AG04450 (cell line): ENCODE measurements at regions of chr3 and their contacts with region 1.

Region 1: GRCh38 chr3:25594007-25594502 is 70.7 kb downstream of the TOP2B start:
- DNase-seq: peak; percentile 71
- H3K4me3 ChIP-seq: no peak overlapping the region
- H3K27ac ChIP-seq: no peak overlapping the region
- H3K27me3 ChIP-seq: no peaks in the 10 kb centered on the region
- CTCF ChIP-seq: peak; percentile 75

Region 2: GRCh38 chr3:25532431-25533162 is 61.5 kb before region 1 on chr3:
- CTCF ChIA-PET with region 1: interaction called, 46 read pairs
- POLR2A ChIA-PET with region 1: no interaction called
- DNase-seq: no peak
- H3K4me3 ChIP-seq: no peak overlapping the region
- H3K27ac ChIP-seq: no peak overlapping the region
- H3K27me3 ChIP-seq: no peaks in the 10 kb centered on the region
- CTCF ChIP-seq: peak; percentile 62

Region 3: GRCh38 chr3:25582242-25582641 is 11.8 kb before region 1 on chr3:
- CTCF ChIA-PET with region 1: interaction called, 76 read pairs
- POLR2A ChIA-PET with region 1: no interaction called
- DNase-seq: peak; percentile 71
- H3K4me3 ChIP-seq: no peak overlapping the region
- H3K27ac ChIP-seq: peak overlapping the region; percentile 42
- H3K27me3 ChIP-seq: no peaks in the 10 kb centered on the region
- CTCF ChIP-seq: no peak

Region 4: DNA sequence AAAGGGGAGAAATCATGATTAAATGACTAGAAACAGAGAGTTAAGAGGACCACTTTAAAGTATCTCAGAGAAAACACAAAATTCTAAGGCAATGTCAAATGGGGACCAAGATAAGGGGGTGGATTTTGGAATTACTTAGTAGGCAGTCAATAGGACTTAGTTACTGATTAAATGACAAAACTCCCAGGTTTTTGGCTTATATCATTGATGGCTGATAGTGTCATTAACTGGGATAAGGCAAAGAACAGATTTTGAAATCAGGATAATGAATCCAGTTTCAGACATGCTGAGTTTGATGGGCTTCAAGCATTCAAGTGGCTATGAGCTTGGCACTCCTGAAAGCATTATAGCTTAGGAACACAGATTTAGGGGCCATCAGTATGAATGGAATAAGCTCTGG is 16.7 kb after region 1 on chr3:
- CTCF ChIA-PET with region 1: interaction called, 76 read pairs
- POLR2A ChIA-PET with region 1: no interaction called
- DNase-seq: no peak
- H3K4me3 ChIP-seq: no peak overlapping the region
- H3K27ac ChIP-seq: no peak overlapping the region
- H3K27me3 ChIP-seq: no peaks in the 10 kb centered on the region
- CTCF ChIP-seq: no peak

Region 5: GRCh38 chr3:25633919-25634318 is 39.9 kb after region 1 on chr3:
- CTCF ChIA-PET with region 1: interaction called, 11 read pairs
- POLR2A ChIA-PET with region 1: no interaction called
- DNase-seq: no peak
- H3K4me3 ChIP-seq: no peak overlapping the region
- H3K27ac ChIP-seq: no peak overlapping the region
- H3K27me3 ChIP-seq: no peaks in the 10 kb centered on the region
- CTCF ChIP-seq: no peak